Activated T-helper 2 cell treated with anti-CD3 and anti-CD28 coated beads, Interferon-gamma antibody, Interleukin-2, Interleukin-4, amounts not matched to agents 10 μg/mL and 5 μg/mL and 100 μg/mL, durations not matched to agents 14 hours and 24 hours and 36 hours (primary cell): ENCODE measurements at regions of chr2 and their contacts with region 1.

Region 1: DNA sequence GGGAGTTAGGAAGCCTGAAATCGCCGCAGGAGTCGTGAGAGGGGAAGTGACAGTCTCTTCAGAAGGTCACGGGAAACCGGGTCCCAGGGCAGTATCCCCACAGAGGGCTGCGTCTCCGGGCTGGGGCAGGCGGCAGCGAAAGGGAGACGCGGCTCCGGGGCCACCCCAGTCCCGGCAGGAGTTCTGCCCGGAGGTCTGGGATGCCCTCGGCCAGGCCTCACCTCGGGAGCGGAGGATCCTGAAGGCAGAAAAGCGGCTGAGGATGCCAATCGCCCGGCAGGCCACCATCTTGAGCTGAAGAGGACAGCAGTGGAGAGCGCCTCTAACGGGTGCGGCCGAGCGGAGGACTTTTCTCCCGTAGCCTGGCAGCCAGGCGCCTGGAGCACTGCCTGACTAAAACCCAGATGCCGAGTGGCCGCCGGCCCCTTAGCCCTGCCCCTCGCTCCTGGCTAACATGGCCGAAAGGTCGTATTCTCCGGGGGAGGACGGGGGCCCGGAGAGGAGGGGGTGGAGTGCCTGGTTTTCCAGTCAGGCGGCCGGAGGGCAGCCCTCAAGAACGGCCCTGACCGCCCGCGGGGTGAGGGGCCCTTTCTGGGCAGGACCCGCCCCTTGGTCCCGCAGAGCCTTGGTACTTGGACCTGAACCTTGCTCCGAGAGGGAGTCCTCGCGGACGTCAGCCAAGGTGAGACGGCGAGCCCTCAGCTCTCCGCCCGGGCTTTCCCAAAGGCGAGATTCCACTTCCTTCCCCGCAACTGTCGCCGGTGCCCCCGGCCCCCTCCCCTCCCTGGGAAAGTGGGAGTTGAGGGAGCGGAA is at the starts of genes HADHA and HADHB:
- DNase-seq: peak; percentile 80
- H3K4me3 Mint-ChIP-seq: peak within 1 kb of the TSS; percentile 99
- H3K27ac Mint-ChIP-seq: peak within 1 kb of the TSS; percentile 98
- H3K4me1 Mint-ChIP-seq: peaks cover 45% of the 10 kb centered on the region
- H3K27me3 Mint-ChIP-seq: no peaks in the 10 kb centered on the region
- total RNA-seq, gene HADHA: 134 and 137 TPM in 2 replicates
- total RNA-seq, gene HADHB: 104 and 108 TPM in 2 replicates

Region 2: DNA sequence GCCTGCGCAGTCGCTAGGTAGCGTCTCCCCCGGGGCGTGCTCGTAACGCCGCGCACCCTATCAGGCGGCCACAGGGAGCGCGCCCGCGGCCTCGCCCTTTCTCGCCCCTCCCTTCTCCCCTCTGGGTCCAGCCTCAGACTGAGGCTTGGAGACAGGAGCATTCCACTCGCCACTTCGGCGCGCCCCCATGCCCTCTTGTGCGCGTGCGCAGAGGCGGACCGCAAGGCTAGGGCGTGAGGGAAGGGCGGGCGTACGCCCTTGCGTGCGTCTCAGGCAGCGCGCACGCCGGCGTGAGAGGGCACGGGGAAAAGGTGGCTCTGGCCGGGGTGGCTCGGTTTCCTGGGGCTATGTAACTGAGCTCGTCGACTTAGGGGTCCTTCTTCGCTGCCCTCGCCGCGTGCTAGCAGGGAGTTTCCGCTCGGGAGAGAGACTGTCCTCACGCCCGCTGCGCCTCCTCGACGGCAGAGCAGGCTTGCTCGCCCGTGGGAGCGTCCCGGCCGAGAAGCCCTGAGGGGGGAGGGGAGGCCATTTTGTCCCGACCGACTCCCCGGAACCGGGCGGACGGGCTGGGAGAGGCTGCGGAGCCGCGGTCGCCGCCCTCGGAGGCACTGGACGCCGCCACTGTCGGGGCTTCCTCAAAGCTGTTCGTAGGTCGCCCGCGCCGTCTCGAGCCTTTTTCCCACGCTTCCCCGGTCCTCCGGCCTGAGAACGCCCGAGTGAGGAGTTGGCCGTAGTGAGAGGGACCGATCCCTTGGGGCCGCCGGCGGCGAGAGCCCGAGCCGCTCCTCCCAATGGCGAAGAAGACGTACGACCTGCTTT is 210.5 kb before region 1 on chr2 and contains the start of gene RAB10:
- intact Hi-C with region 1: loop called (anchors 1 kb)
- DNase-seq: peak; percentile 100
- H3K4me3 Mint-ChIP-seq: peak within 1 kb of the TSS; percentile 93
- H3K27ac Mint-ChIP-seq: peak within 1 kb of the TSS; percentile 88
- H3K4me1 Mint-ChIP-seq: peaks cover 19% of the 10 kb centered on the region
- H3K27me3 Mint-ChIP-seq: peaks cover 2% of the 10 kb centered on the region
- total RNA-seq, gene RAB10: 134 and 140 TPM in 2 replicates

Region 3: GRCh38 chr2:26068602-26069298 is 175.8 kb before region 1 on chr2:
- intact Hi-C with region 1: loop called (anchors 5 kb)
- DNase-seq: peak; percentile 53
- H3K4me3 Mint-ChIP-seq: peak overlapping the region; percentile 27
- H3K27ac Mint-ChIP-seq: peak overlapping the region; percentile 93
- H3K4me1 Mint-ChIP-seq: peaks cover 53% of the 10 kb centered on the region
- H3K27me3 Mint-ChIP-seq: no peaks in the 10 kb centered on the region

Region 4: GRCh38 chr2:26184555-26185303 is 59.8 kb before region 1 on chr2:
- intact Hi-C with region 1: loop called (anchors 2 kb)
- DNase-seq: peak; percentile 82
- H3K4me3 Mint-ChIP-seq: peak overlapping the region; percentile 73
- H3K27ac Mint-ChIP-seq: no peak overlapping the region
- H3K4me1 Mint-ChIP-seq: peaks cover 12% of the 10 kb centered on the region
- H3K27me3 Mint-ChIP-seq: peaks cover 22% of the 10 kb centered on the region

Region 5: GRCh38 chr2:26223018-26223417 is 21.5 kb before region 1 on chr2:
- intact Hi-C with region 1: no loop called
- DNase-seq: no peak
- H3K4me3 Mint-ChIP-seq: no peak overlapping the region
- H3K27ac Mint-ChIP-seq: no peak overlapping the region
- H3K4me1 Mint-ChIP-seq: no peaks in the 10 kb centered on the region
- H3K27me3 Mint-ChIP-seq: no peaks in the 10 kb centered on the region

Region 6: GRCh38 chr2:26299471-26300101 is 55.1 kb after region 1 on chr2:
- intact Hi-C with region 1: loop called (anchors 2 kb)
- DNase-seq: no peak
- H3K4me3 Mint-ChIP-seq: no peak overlapping the region
- H3K27ac Mint-ChIP-seq: no peak overlapping the region
- H3K4me1 Mint-ChIP-seq: no peaks in the 10 kb centered on the region
- H3K27me3 Mint-ChIP-seq: peaks cover 2% of the 10 kb centered on the region

Region 7: DNA sequence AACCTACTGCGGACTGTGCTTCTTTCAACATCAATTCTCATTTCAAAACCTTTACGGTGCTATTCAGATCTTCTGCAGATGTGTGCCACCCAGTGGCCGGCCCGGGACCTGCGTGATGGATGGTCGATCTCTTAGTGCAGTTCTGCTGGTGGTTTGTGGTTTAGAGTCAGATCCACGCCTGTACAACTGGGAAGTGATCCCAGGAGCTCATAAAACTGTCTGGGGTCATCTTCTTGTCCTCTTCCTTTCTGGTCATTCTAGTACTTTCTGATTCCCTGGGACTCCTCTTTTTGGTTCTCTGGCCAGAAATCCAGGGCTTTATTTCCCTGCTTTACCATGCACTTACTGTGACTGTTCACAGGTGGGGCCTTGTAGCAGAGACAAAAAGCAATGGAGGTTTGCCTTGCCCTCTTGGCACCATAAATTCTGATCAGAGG is 85.6 kb after region 1 on chr2:
- intact Hi-C with region 1: loop called (anchors 2 kb)
- DNase-seq: peak; percentile 75
- H3K4me3 Mint-ChIP-seq: no peak overlapping the region
- H3K27ac Mint-ChIP-seq: no peak overlapping the region
- H3K4me1 Mint-ChIP-seq: peaks cover 23% of the 10 kb centered on the region
- H3K27me3 Mint-ChIP-seq: no peaks in the 10 kb centered on the region

Region 8: DNA sequence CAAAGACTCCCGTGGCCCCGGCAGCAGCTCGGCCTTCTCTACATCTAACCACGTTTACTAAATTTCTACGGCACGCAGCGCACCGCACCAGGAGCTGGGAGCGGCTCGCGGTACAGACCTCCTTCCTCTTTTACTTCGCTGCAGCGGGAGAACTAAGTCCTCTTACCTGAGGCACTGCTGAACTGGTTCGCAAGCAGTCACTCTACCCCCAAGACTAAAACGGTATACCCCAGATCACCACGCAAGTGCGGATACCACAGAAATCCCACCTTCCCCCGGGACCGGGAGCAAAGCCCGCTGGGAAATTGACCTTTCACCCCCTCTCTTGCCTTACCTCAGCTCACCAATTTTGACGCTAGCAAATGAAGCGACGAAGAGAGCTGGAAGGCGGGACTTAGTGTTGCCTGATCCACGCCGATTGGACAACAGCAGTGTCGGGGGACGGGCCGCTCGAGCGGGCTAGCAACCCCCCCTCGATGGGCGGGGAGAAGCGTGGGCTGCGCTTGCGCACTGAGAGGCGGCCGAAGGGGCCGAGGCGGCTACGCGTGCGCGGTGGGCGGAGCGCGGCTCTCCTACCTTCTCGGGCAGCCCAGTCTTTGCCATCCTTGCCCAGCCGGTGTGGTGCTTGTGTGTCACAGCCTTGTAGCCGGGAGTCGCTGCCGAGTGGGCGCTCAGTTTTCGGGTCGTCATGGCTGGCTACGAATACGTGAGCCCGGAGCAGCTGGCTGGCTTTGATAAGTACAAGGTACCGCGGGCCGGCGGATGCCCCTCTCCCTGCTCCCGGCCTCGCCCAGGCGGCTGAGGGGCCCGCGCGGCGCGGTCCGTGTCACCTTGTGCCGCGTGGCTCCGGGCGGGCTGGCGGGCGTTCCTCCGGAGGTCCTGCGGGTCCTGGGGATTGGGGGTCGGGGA is 101.3 kb after region 1 on chr2 and contains the start of gene SELENOI:
- intact Hi-C with region 1: loop called (anchors 5 kb)
- DNase-seq: peak; percentile 99
- H3K4me3 Mint-ChIP-seq: peak within 1 kb of the TSS; percentile 99
- H3K27ac Mint-ChIP-seq: peak within 1 kb of the TSS; percentile 99
- H3K4me1 Mint-ChIP-seq: peaks cover 25% of the 10 kb centered on the region
- H3K27me3 Mint-ChIP-seq: no peaks in the 10 kb centered on the region
- total RNA-seq, gene SELENOI: 45.5 and 51.4 TPM in 2 replicates